ENCODE measurements at regions of chr9 and their contacts with region 1.

Region 1: GRCh38 chr9:71819115-71819739 is 50.9 kb upstream of the CEMIP2 start:
- H3K4me3 Mint-ChIP-seq: no peak overlapping the region
- H3K27ac Mint-ChIP-seq: no peak overlapping the region
- H3K4me1 Mint-ChIP-seq: peaks cover 10% of the 10 kb centered on the region
- H3K27me3 Mint-ChIP-seq: peaks cover 5% of the 10 kb centered on the region

Region 2: DNA sequence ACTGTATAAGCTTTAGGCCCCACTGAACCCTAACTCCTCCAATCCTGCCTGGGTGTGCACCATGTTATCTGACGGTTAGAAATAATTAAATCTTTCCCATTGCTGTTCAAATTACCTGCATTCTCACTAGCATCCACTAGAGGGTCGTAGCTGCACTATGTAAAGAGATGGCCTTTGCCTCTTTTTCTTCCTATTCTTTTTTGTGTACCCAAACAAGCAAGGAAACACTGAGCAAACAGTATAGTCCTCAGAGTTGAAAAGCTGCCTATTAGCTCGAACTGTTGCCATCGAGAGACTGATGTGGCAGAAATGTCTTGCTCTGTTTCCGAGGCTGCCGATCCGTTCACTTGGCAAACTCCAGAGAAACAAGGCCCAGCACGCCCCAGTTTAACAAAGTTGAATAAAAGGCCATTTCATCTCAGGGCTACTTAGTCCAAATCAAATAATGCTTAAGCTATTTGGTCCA is 534.0 kb before region 1 on chr9:
- intact Hi-C with region 1: loop called (anchors 2 kb)
- H3K4me3 Mint-ChIP-seq: no peak overlapping the region
- H3K27ac Mint-ChIP-seq: no peak overlapping the region
- H3K4me1 Mint-ChIP-seq: no peaks in the 10 kb centered on the region
- H3K27me3 Mint-ChIP-seq: no peaks in the 10 kb centered on the region

Region 3: GRCh38 chr9:71911253-71912074 is 92.2 kb after region 1 on chr9 and contains the start of gene C9orf85:
- intact Hi-C with region 1: loop called (anchors 5 kb)
- H3K4me3 Mint-ChIP-seq: peak within 1 kb of the TSS; percentile 90
- H3K27ac Mint-ChIP-seq: peak within 1 kb of the TSS; percentile 95
- H3K4me1 Mint-ChIP-seq: peaks cover 44% of the 10 kb centered on the region
- H3K27me3 Mint-ChIP-seq: no peaks in the 10 kb centered on the region